ENCODE measurements at regions of chr5 and their contacts with region 1.

Region 1: GRCh38 chr5:80960531-80961375 is 590 bp downstream of the RASGRF2 start:
- DNase-seq: peak; percentile 30
- H3K4me3 Mint-ChIP-seq: peak overlapping the region; percentile 89
- H3K27ac Mint-ChIP-seq: peak overlapping the region; percentile 83
- H3K4me1 Mint-ChIP-seq: peaks cover 55% of the 10 kb centered on the region
- H3K27me3 Mint-ChIP-seq: peaks cover 6% of the 10 kb centered on the region

Region 2: GRCh38 chr5:80754900-80755299 is 205.9 kb before region 1 on chr5:
- intact Hi-C with region 1: loop called (anchors 1 kb)
- DNase-seq: no peak
- H3K4me3 Mint-ChIP-seq: peak overlapping the region; percentile 49
- H3K27ac Mint-ChIP-seq: peak overlapping the region; percentile 91
- H3K4me1 Mint-ChIP-seq: peaks cover 62% of the 10 kb centered on the region
- H3K27me3 Mint-ChIP-seq: no peaks in the 10 kb centered on the region

Region 3: GRCh38 chr5:80793354-80793753 is 167.4 kb before region 1 on chr5:
- intact Hi-C with region 1: loop called (anchors 1 kb)
- DNase-seq: no peak
- H3K4me3 Mint-ChIP-seq: no peak overlapping the region
- H3K27ac Mint-ChIP-seq: no peak overlapping the region
- H3K4me1 Mint-ChIP-seq: peaks cover 11% of the 10 kb centered on the region
- H3K27me3 Mint-ChIP-seq: no peaks in the 10 kb centered on the region

Region 4: DNA sequence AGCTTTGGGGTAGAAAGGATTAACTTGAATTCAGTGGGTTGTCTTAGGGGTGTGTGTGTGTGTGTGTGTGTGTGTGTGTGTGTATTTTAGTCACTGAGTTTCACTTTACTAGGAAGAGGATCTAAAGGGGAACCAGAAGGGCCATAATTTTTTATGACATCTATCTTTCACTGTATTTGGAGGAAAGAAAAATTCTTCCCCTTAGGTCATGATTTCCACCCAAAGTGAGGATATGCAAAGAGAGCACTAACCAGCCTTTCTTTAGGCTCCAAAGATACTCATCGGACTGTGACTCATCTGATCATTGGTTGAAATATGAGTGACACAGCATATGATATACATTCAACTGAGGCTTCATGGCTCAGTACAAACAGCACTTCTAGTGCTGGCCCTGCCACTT is 75.8 kb before region 1 on chr5:
- intact Hi-C with region 1: loop called (anchors 5 kb)
- DNase-seq: no peak
- H3K4me3 Mint-ChIP-seq: no peak overlapping the region
- H3K27ac Mint-ChIP-seq: peak overlapping the region; percentile 67
- H3K4me1 Mint-ChIP-seq: peaks cover 16% of the 10 kb centered on the region
- H3K27me3 Mint-ChIP-seq: no peaks in the 10 kb centered on the region

Region 5: GRCh38 chr5:80941551-80941950 is 19.2 kb before region 1 on chr5:
- intact Hi-C with region 1: no loop called
- DNase-seq: no peak
- H3K4me3 Mint-ChIP-seq: no peak overlapping the region
- H3K27ac Mint-ChIP-seq: no peak overlapping the region
- H3K4me1 Mint-ChIP-seq: peaks cover 3% of the 10 kb centered on the region
- H3K27me3 Mint-ChIP-seq: no peaks in the 10 kb centered on the region

Region 6: GRCh38 chr5:81020478-81021174 is 59.9 kb after region 1 on chr5:
- intact Hi-C with region 1: loop called (anchors 1 kb)
- DNase-seq: no peak
- H3K4me3 Mint-ChIP-seq: no peak overlapping the region
- H3K27ac Mint-ChIP-seq: no peak overlapping the region
- H3K4me1 Mint-ChIP-seq: peaks cover 63% of the 10 kb centered on the region
- H3K27me3 Mint-ChIP-seq: no peaks in the 10 kb centered on the region

Region 7: GRCh38 chr5:81165493-81166119 is 204.9 kb after region 1 on chr5:
- intact Hi-C with region 1: loop called (anchors 5 kb)
- DNase-seq: peak; percentile 49
- H3K4me3 Mint-ChIP-seq: no peak overlapping the region
- H3K27ac Mint-ChIP-seq: peak overlapping the region; percentile 38
- H3K4me1 Mint-ChIP-seq: peaks cover 28% of the 10 kb centered on the region
- H3K27me3 Mint-ChIP-seq: no peaks in the 10 kb centered on the region

Region 8: DNA sequence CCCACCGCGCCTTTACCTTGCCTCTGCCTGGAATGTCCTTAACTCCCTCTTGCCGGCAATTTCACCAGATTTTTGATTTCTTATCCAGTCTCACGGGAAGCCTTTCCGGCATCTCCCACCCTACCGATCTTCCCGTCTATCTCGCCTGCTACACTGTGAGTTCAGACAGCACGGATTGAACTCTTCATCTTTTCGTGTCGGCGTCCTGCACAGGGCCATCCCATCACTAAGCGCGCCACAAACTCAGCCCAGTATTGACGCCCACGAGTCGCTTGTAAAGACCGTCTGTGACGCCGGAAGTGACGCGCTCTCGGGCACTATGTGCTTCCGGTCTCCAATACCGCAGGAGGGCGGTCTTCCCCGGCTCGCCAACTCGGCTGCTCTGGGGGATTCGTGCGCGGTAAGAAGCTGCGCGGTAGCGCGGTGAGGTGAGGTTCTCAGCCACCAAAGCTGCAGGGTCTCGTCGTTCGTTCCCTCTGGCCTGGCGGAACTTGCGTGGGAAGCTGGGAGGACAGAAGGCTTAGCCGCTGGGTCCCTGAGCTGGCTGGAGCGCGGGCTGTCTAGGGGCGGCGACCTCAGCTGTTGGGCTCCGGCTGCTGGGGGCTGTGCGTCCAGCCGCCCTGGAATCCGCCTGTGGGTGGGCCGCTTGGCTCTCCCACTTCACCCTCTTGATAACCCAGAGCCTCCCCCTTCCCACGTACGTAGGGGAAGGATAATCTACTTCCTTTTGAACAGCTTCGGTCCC is 340.7 kb after region 1 on chr5 and contains the start of gene ZCCHC9:
- intact Hi-C with region 1: loop called (anchors 5 kb)
- DNase-seq: peak; percentile 90
- H3K4me3 Mint-ChIP-seq: peak within 1 kb of the TSS; percentile 92
- H3K27ac Mint-ChIP-seq: peak within 1 kb of the TSS; percentile 95
- H3K4me1 Mint-ChIP-seq: peaks cover 46% of the 10 kb centered on the region
- H3K27me3 Mint-ChIP-seq: no peaks in the 10 kb centered on the region
- total RNA-seq, gene ZCCHC9: 43.4 and 46.9 TPM in 2 replicates